ENCODE measurements at regions of chr15 and their contacts with region 1.

Region 1: GRCh38 chr15:75453703-75454470 is 2.4 kb upstream of the SIN3A start:
- DNase-seq: peak; percentile 97 to 100 (median 99)
- H3K4me3 ChIP-seq: peak overlapping the region; percentile 81 to 95 (median 88)
- H3K4me3 Mint-ChIP-seq: peak overlapping the region; percentile 86 to 92
- H3K27ac ChIP-seq: peak overlapping the region; percentile 80 to 91
- H3K27ac Mint-ChIP-seq: peak overlapping the region; percentile 94 to 99 (median 97)
- H3K4me1 ChIP-seq: peaks cover 36 to 44% of the 10 kb centered on the region in 2 donors
- H3K4me1 Mint-ChIP-seq: peaks cover 37% of the 10 kb centered on the region
- H3K27me3 ChIP-seq: no peaks in the 10 kb centered on the region
- H3K27me3 Mint-ChIP-seq: peaks cover 0 to 2% (median 1%) of the 10 kb centered on the region in 3 donors
- CTCF ChIP-seq: no peak

Region 2: DNA sequence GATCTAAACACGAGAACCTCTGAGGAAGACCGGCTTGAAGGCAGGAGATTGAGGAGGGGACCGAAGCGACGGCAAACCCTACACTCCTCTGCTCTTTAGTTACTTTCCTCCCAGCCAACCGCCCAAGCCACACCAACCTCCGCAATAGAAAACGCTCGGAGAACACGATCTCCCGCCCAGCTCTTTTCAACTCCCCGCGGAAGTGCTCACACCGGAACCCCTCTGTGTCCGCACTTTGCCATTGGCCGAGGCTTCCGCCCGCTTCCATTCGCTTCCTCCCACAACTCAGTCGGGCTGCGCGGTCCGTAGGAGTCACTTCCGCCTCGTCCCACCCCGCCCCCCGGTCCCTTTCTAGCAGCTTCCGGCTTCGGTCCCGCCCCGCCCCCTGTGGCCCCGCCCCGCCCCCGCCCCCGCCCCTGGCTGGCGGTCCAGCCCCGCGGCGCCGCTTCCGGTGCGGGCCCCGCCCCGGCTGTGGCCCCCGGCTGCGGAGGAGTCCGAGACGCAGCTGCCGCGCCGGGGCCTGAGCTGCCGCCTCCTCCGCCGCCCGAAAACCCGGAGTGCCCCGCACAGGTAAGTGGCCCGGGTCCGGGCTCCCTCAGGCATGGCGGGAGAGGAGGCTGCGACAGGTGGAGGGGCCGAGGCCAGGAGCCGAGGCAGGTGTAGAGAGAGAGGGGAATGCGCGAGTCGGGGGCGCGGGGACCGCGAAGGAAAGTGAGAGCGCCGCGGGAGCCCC is 913.0 kb before region 1 on chr15 and contains the start of gene ARID3B:
- intact Hi-C with region 1: loop called in 1 of 2 experiments (anchors 10 kb)
- DNase-seq: peak; percentile 97 to 98 (median 97)
- H3K4me3 ChIP-seq: peak within 1 kb of the TSS; percentile 79 to 91 (median 84)
- H3K4me3 Mint-ChIP-seq: peak within 1 kb of the TSS; percentile 92 to 96
- H3K27ac ChIP-seq: peak within 1 kb of the TSS; percentile 69 to 84
- H3K27ac Mint-ChIP-seq: peak within 1 kb of the TSS; percentile 89 to 97 (median 95)
- H3K4me1 ChIP-seq: peaks cover 30 to 49% of the 10 kb centered on the region in 2 donors
- H3K4me1 Mint-ChIP-seq: peaks cover 46% of the 10 kb centered on the region
- H3K27me3 ChIP-seq: no peaks in the 10 kb centered on the region
- H3K27me3 Mint-ChIP-seq: peaks cover 3 to 8% (median 7%) of the 10 kb centered on the region in 3 donors
- CTCF ChIP-seq: no peak
- polyA plus RNA-seq, gene ARID3B: 2.3 to 17.4 (median 4.4) TPM

Region 3: GRCh38 chr15:74937596-74938296 is 516.1 kb before region 1 on chr15 and contains the start of gene COX5A:
- intact Hi-C with region 1: loop called in 1 of 2 experiments (anchors 5 kb)
- DNase-seq: peak; percentile 91 to 96 (median 94)
- H3K4me3 ChIP-seq: peak within 1 kb of the TSS; percentile 69 to 92 (median 81)
- H3K4me3 Mint-ChIP-seq: peak within 1 kb of the TSS; percentile 78 to 92
- H3K27ac ChIP-seq: peak within 1 kb of the TSS; percentile 77 to 88
- H3K27ac Mint-ChIP-seq: peak within 1 kb of the TSS; percentile 82 to 94 (median 91)
- H3K4me1 ChIP-seq: peaks cover 16 to 29% of the 10 kb centered on the region in 2 donors
- H3K4me1 Mint-ChIP-seq: peaks cover 26% of the 10 kb centered on the region
- H3K27me3 ChIP-seq: no peaks in the 10 kb centered on the region
- H3K27me3 Mint-ChIP-seq: peaks cover 0 to 1% (median 1%) of the 10 kb centered on the region in 3 donors
- CTCF ChIP-seq: no peak
- polyA plus RNA-seq, gene COX5A: 127 to 498 (median 434) TPM

Region 4: DNA sequence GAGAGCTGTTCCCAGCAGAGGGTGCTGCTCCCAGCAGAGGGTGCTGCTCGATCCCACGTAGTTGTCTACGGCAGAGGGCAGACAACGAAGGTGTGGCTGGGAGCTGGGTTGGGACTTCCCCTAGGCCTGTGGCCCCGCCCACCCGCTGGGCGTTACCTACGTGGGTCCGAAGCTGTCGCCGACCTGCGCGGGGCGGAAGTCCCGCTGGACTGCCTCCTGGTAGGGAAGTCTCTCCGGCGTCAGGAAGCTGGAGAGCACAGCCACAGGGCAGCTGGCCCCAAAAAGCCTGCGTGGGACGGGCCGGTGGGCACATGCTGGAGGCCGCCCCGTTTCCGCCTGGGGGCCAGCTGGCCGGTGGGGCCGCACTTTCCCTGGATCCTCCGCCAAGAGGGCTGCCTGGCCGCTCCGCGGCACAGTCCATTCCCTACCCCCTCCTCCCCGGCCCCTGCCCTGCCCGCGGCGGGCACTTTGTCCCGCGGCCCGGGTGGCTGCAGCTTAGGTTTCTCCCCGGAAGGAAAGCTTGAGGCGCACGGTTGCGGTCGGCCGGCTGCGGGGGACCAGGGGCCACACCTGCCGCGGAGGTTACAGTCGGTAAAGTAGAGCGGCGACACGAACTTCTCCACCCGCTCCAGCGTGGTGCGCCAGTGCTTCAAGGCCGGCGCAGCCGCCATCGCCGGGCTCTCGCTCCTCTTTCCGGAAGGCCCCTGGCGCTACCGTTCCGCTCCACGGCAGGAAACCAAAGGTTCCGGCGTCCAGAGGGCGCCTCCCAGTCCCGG is 85.8 kb before region 1 on chr15 and contains the start of gene MAN2C1:
- intact Hi-C with region 1: loop called in 1 of 2 experiments (anchors 5 kb)
- DNase-seq: peak; percentile 90 to 91 (median 90)
- H3K4me3 ChIP-seq: peak within 1 kb of the TSS; percentile 52 to 98 (median 95)
- H3K4me3 Mint-ChIP-seq: peak within 1 kb of the TSS; percentile 88 to 94
- H3K27ac ChIP-seq: peak within 1 kb of the TSS; percentile 90 to 94
- H3K27ac Mint-ChIP-seq: peak within 1 kb of the TSS; percentile 91 to 97 (median 95)
- H3K4me1 ChIP-seq: peaks cover 13 to 19% of the 10 kb centered on the region in 2 donors
- H3K4me1 Mint-ChIP-seq: peaks cover 18% of the 10 kb centered on the region
- H3K27me3 ChIP-seq: no peaks in the 10 kb centered on the region
- H3K27me3 Mint-ChIP-seq: peaks cover 0 to 2% (median 1%) of the 10 kb centered on the region in 3 donors
- CTCF ChIP-seq: peak; percentile 7
- polyA plus RNA-seq, gene MAN2C1: 32.9 to 453 (median 42.9) TPM

Region 5: DNA sequence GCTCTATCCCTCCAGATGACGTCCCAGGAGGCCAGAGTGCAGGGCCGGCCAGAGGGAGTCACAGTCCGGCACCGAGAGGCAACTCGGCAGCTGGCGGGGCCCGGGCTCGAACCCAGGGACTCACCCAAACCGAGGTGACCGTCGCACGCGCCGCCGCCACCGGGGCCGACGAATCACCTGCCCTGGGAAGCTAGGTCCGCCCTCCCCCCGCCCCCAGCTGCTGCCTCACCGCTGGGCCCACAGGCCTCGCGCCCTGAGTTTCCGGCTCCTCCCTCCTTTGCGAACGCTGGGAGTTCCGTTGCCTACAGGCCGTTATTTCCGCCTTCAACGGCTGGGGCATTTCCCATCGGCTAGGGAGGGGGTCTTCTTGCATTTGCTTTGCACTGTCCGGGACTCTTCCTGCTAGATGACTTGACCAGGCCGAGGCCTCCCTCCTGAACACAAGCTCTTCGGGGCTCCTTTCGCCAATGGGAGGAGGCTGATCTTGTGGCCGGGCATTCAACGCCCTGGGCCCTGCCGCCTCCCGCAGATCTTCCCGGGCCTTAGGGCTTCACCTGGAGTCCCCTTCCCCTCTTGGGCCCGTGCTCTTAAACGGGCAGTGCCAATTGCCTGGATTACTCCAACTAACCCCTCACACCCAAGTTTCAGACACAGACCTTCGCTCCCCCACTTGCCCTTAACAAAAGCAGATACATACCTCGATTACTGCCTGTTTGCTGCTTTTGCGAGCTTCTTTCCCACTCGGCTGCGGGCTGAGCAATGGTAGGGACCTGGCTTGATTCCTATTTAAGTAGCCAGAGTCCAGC is 171.9 kb after region 1 on chr15 and contains the start of gene SNUPN:
- intact Hi-C with region 1: loop called in 1 of 2 experiments (anchors 5 kb)
- DNase-seq: peak; percentile 87 to 93 (median 90)
- H3K4me3 ChIP-seq: peak within 1 kb of the TSS; percentile 83 to 97 (median 89)
- H3K4me3 Mint-ChIP-seq: peak within 1 kb of the TSS; percentile 92 to 95
- H3K27ac ChIP-seq: peak within 1 kb of the TSS; percentile 89 to 96
- H3K27ac Mint-ChIP-seq: peak within 1 kb of the TSS; percentile 94 to 99 (median 98)
- H3K4me1 ChIP-seq: peaks cover 23 to 32% of the 10 kb centered on the region in 2 donors
- H3K4me1 Mint-ChIP-seq: peaks cover 38% of the 10 kb centered on the region
- H3K27me3 ChIP-seq: no peaks in the 10 kb centered on the region
- H3K27me3 Mint-ChIP-seq: peaks cover 0 to 2% (median 2%) of the 10 kb centered on the region in 3 donors
- CTCF ChIP-seq: no peak
- polyA plus RNA-seq, gene SNUPN: 11.7 to 31.8 (median 29.3) TPM

Region 6: DNA sequence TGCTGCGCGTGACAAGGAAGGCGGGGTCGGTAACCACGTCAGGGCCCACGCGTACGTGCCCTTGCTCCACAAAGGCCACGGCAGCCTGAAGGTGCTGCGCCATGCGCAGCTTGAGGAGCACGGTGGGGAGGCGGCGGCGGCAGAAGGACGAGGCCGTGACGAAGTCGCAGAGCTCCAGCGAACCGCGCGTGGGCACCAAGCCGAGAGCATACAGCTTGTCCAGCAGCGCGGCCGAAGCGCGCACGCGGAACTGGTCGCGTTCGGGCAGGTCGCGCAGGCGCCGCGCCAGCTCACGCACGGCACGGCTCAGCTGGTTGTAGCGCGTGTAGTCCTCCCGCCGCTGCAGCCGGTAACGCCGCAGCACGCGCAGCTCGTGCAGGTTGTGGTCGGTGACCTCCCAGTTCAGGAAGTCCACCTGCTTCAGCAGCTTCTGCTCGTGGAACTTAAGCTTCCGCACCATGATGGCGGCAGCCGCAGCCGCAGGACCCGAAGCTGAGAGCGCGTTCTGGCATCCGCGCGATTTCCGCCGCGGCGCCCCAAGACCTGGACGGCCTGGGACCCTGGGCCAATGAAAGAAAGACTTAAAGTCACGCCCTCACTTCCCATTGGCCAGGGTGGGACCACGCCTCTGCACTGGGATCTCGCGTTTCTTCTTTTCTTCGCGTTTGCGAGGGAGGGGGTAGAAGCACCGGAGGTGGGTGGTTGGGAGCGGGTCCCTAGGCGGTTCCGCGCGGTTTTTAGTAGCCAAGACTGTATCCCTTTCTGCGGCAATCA is 186.0 kb after region 1 on chr15 and contains the start of gene IMP3:
- intact Hi-C with region 1: loop called (anchors 5 kb)
- DNase-seq: peak; percentile 93 to 94 (median 94)
- H3K4me3 ChIP-seq: peak within 1 kb of the TSS; percentile 77 to 83 (median 80)
- H3K4me3 Mint-ChIP-seq: peak within 1 kb of the TSS; percentile 87 to 91
- H3K27ac ChIP-seq: peak within 1 kb of the TSS; percentile 89 to 97
- H3K27ac Mint-ChIP-seq: peak within 1 kb of the TSS; percentile 91 to 97 (median 95)
- H3K4me1 ChIP-seq: peaks cover 30 to 38% of the 10 kb centered on the region in 2 donors
- H3K4me1 Mint-ChIP-seq: peaks cover 34% of the 10 kb centered on the region
- H3K27me3 ChIP-seq: no peaks in the 10 kb centered on the region
- H3K27me3 Mint-ChIP-seq: peaks cover 2 to 6% (median 6%) of the 10 kb centered on the region in 3 donors
- CTCF ChIP-seq: no peak
- polyA plus RNA-seq, gene IMP3: 36.7 to 119 (median 99.3) TPM

Region 7: GRCh38 chr15:75738647-75739331 is 284.9 kb after region 1 on chr15:
- intact Hi-C with region 1: no loop called
- DNase-seq: peak; percentile 89 to 94 (median 90)
- H3K4me3 ChIP-seq: peak overlapping the region; percentile 71 to 84 (median 84)
- H3K4me3 Mint-ChIP-seq: peak overlapping the region; percentile 87 to 96
- H3K27ac ChIP-seq: peak overlapping the region; percentile 32 to 80
- H3K27ac Mint-ChIP-seq: peak overlapping the region in 6 of 7 donors; percentile 82 to 94 (median 88)
- H3K4me1 ChIP-seq: peaks cover 39 to 43% of the 10 kb centered on the region in 2 donors
- H3K4me1 Mint-ChIP-seq: peaks cover 39% of the 10 kb centered on the region
- H3K27me3 ChIP-seq: no peaks in the 10 kb centered on the region
- H3K27me3 Mint-ChIP-seq: peaks cover 5 to 8% (median 6%) of the 10 kb centered on the region in 3 donors
- CTCF ChIP-seq: no peak

Region 8: DNA sequence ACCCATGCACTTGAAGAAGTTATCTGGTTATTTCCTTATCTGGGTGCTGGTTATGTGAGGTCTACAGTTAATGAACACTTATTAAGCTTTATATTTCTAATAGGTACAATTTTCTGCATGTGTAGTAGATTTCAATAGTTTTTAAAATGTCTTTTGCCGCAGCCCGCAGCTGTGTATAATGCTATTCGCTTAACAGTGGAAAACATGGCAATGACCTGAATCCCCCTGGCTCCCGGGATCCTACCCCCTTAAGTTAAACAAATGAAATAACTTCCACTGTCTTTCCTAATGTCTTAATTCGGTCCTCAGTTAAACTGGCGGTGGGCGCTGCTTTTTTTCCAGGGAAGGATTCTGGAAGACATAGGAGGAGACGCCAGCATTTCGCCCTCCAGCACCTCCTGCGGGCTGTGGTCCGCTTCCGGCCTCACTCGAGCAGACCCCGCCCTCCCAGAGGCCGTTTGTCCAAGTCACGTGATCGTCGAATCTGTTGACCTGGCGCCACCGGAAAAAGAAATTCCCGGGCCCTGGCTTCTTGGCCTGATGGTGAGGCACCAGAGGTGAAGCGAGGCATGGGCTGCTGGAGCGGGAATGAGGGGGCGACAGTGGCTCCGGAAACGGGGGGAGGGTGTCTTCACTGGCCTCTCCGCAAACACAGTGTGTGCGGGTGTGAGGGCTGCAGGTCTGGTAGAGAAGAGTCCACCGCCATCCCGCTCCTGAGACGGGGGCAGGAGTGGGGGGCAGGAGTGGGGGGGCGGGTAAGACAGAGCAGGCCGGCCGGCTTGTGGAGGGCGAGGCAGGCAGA is 304.4 kb after region 1 on chr15:
- intact Hi-C with region 1: loop called in 1 of 2 experiments (anchors 5 kb)
- DNase-seq: peak; percentile 55 to 81 (median 77)
- H3K4me3 ChIP-seq: peak overlapping the region; percentile 51 to 85 (median 81)
- H3K4me3 Mint-ChIP-seq: peak overlapping the region; percentile 91 to 94
- H3K27ac ChIP-seq: peak overlapping the region; percentile 70 to 89
- H3K27ac Mint-ChIP-seq: peak overlapping the region; percentile 92 to 97 (median 95)
- H3K4me1 ChIP-seq: peaks cover 15 to 19% of the 10 kb centered on the region in 2 donors
- H3K4me1 Mint-ChIP-seq: peaks cover 23% of the 10 kb centered on the region
- H3K27me3 ChIP-seq: no peaks in the 10 kb centered on the region
- H3K27me3 Mint-ChIP-seq: peaks cover 0 to 2% (median 0%) of the 10 kb centered on the region in 3 donors
- CTCF ChIP-seq: peak; percentile 40

Region 9: DNA sequence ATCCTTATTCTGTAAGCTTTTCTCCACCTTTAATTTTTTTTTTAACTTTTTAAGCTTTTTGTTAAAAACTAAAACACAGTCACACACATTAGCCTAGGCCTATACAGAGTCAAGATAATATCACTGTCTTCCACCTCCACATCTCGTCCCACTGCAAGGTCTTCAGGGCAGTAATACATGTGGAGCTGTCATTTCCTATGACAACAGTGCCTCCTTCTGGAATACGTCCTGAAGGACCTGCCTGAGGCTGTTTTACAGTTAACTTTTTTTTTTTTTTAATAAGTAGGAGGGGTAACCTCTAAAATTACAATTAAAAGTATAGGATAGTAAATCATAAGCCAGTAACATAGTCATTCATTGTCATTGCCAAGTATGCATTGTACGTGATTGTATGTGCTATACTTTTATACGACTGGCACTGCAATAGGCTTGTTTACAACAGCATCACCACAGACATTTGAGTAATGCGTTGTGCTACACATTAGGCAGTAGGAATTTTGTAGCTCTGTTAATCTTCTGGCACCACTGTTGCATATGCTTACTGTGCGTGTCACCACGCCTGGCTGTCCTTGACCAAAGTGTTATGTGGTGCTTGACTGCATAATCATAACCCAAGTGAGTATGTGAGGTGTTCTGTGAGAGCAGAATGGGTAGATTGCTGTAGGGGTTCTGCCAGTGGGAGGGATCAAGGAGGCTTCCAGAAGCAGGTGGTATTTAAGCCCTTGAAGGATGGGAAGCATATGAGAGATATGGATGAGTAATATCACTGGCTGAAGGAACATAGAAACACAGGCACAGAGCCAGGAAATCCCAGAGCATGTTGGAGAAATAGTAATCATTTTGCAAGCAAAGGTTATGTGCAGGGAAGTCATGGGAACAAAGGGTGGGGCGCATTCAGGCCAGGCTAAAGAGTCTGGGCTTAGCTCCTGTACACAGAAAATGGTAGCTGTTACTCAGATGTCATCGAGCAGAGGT is 468.1 kb after region 1 on chr15:
- intact Hi-C with region 1: no loop called
- DNase-seq: peak; percentile 1 to 7 (median 4)
- H3K4me3 ChIP-seq: no peak overlapping the region
- H3K4me3 Mint-ChIP-seq: no peak overlapping the region
- H3K27ac ChIP-seq: no peak overlapping the region
- H3K27ac Mint-ChIP-seq: peak overlapping the region in 1 of 7 donors; percentile 26
- H3K4me1 ChIP-seq: peaks cover 0 to 9% of the 10 kb centered on the region in 2 donors
- H3K4me1 Mint-ChIP-seq: peaks cover 12% of the 10 kb centered on the region
- H3K27me3 ChIP-seq: no peaks in the 10 kb centered on the region
- H3K27me3 Mint-ChIP-seq: no peaks in the 10 kb centered on the region
- CTCF ChIP-seq: peak; percentile 28

Measured in CD14-positive monocyte (primary cell).